AG04449 (cell line): ENCODE measurements at regions of chr5 and their contacts with region 1.

Region 1: GRCh38 chr5:92922231-92922967 is 658.6 kb downstream of the NR2F1-AS1 start:
- DNase-seq: no peak
- H3K4me3 ChIP-seq: no peak overlapping the region
- CTCF ChIP-seq: no peak

Region 2: GRCh38 chr5:92890841-92891244 is 31.6 kb before region 1 on chr5:
- CTCF ChIA-PET with region 1: no interaction called
- POLR2A ChIA-PET with region 1: no interaction called
- DNase-seq: no peak
- H3K4me3 ChIP-seq: no peak overlapping the region
- CTCF ChIP-seq: no peak

Region 3: DNA sequence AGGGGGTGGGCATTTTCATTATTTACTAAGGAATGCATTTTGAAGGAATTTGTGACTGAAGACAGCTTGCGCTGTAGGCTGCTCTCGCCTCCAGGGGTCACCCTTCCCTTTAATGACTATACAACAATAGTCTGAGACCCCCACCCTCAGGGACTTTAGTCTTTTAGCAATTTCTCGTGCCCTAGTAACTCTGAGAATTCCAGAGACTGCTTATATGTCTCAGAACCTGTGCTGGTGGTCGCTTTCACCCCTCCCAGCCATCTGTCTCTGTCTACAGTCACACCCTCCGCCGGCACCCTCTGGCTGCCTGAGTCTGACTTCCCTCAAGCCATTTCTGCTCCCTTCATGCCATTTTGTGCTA is 12.8 kb before region 1 on chr5:
- CTCF ChIA-PET with region 1: interaction called, 40 read pairs
- POLR2A ChIA-PET with region 1: no interaction called
- DNase-seq: no peak
- H3K4me3 ChIP-seq: no peak overlapping the region
- CTCF ChIP-seq: peak; percentile 35